Activated T-helper 2 cell treated with anti-CD3 and anti-CD28 coated beads, Interferon-gamma antibody, Interleukin-2, Interleukin-4, amounts not matched to agents 10 μg/mL and 5 μg/mL and 100 μg/mL, durations not matched to agents 14 hours and 24 hours and 36 hours (primary cell): ENCODE measurements at regions of chr13 and their contacts with region 1.

Region 1: DNA sequence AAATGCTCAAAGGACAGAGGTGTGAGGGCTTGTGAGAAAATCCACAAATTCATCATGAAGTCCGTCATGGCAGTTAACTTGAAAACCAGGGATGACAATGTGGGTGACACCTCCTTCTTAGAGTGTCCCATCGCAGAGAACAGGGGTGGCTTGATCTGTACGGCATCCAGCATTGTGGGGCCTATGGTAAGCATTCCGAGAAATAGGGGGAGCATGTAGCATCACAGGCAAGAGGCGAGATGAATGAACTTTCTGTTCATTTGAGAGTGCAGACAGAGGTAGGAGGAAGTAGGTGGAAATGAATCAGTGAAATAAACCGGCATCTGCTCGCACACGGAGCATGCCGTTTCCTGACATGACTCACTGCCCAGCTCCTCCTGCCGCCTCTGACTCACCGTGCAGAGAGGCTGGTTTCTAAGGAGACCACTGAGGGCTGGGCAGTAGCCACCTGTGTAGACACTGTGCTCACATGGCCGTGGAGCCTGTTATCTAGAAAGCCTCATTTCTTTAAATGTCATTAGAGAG is 339.0 kb downstream of the RFC3 start:
- DNase-seq: peak; percentile 67
- H3K4me3 Mint-ChIP-seq: peak overlapping the region; percentile 70
- H3K27ac Mint-ChIP-seq: peak overlapping the region; percentile 90
- H3K4me1 Mint-ChIP-seq: peaks cover 38% of the 10 kb centered on the region
- H3K27me3 Mint-ChIP-seq: peaks cover 17% of the 10 kb centered on the region

Region 2: DNA sequence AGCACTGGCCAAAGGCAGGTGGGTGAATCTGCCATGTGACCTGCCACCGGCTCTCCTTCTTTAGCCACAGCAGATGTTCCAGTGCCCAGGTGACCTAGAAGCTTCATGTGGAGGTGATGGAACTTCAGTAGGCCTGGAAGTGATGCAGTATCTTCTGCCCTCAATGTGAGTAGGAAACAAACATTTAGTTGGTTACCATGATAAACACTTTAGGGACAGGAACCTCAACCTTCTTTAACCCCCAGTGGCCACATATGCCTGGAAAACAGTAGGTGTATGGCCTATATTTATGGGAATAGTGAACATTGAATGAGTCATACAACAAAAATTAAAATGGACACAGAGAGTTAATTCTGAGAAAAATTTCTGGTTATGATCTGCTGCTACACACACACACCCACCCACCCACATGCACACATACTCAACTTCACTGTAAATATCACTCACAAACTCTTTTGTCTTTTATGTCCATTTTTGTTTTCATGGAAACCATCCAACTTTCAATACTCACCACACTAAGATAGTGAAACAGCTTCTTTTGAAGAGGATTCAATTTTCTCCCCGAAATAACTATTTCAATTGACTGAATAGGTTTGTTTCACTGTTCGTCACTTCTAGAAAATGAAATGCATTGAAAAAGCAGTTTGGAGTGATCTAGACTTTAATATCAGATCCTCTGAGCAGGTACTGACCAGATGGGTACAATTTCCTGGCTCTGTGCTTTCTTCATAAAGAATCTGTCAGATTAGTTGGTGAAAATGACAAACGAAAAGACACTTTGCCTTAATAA is 968.6 kb before region 1 on chr13:
- intact Hi-C with region 1: loop called (anchors 5 kb)
- DNase-seq: no peak
- H3K4me3 Mint-ChIP-seq: no peak overlapping the region
- H3K27ac Mint-ChIP-seq: peak overlapping the region; percentile 97
- H3K4me1 Mint-ChIP-seq: peaks cover 30% of the 10 kb centered on the region
- H3K27me3 Mint-ChIP-seq: no peaks in the 10 kb centered on the region

Region 3: DNA sequence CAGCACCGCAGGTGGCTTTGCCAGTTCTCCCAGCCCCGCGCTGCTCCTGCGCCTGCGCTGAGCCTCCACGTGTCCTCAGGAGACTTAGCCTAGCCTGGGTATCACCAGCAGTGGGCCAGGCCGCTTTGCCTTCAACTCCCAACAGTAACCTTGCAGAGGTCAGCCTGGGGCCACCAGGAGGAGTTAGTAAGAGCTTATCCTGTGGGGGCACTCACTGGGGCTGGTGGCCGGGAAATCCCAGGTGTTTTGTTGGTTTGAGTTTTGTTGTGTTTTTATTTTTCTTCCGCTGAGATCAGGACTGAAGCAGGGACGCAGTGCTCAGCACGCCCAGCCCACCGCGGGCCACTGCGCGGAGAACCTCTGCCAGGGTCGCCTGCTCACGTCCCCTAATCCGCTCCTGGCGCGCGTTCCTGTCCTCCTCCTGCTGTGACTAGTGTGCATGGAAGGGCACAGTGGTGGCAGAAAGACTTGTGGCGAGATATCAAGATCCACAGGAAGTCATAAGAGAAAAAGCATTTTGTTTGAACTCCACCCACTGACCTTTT is 546.4 kb before region 1 on chr13:
- intact Hi-C with region 1: loop called (anchors 2 kb)
- DNase-seq: peak; percentile 40
- H3K4me3 Mint-ChIP-seq: peak overlapping the region; percentile 70
- H3K27ac Mint-ChIP-seq: peak overlapping the region; percentile 95
- H3K4me1 Mint-ChIP-seq: peaks cover 50% of the 10 kb centered on the region
- H3K27me3 Mint-ChIP-seq: no peaks in the 10 kb centered on the region

Region 4: DNA sequence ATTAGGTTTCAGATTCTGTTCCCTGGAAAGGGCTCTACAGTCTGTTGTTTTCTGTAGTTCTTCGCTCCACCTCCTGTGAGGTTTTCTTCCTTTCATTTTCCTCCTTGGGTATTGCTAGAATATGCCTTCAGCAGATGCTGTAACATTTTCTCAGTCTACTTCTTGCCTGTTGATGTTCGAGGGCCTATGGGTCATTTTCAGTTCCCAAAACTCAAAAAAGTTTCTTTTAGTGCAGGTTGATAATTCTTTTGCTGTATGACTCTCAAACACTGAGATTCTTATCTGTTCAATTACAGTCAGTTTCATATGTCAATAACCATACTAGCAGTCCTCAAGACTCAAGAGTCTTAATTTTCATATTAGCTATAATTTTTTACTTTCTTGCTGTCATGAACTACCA is 70.6 kb before region 1 on chr13:
- intact Hi-C with region 1: no loop called
- DNase-seq: no peak
- H3K4me3 Mint-ChIP-seq: no peak overlapping the region
- H3K27ac Mint-ChIP-seq: no peak overlapping the region
- H3K4me1 Mint-ChIP-seq: no peaks in the 10 kb centered on the region
- H3K27me3 Mint-ChIP-seq: no peaks in the 10 kb centered on the region

Region 5: GRCh38 chr13:34174671-34175145 is 17.8 kb after region 1 on chr13:
- intact Hi-C with region 1: no loop called
- DNase-seq: no peak
- H3K4me3 Mint-ChIP-seq: no peak overlapping the region
- H3K27ac Mint-ChIP-seq: no peak overlapping the region
- H3K4me1 Mint-ChIP-seq: no peaks in the 10 kb centered on the region
- H3K27me3 Mint-ChIP-seq: peaks cover 2% of the 10 kb centered on the region

Region 6: GRCh38 chr13:34224877-34225276 is 68.0 kb after region 1 on chr13:
- intact Hi-C with region 1: loop called (anchors 5 kb)
- DNase-seq: no peak
- H3K4me3 Mint-ChIP-seq: no peak overlapping the region
- H3K27ac Mint-ChIP-seq: no peak overlapping the region
- H3K4me1 Mint-ChIP-seq: no peaks in the 10 kb centered on the region
- H3K27me3 Mint-ChIP-seq: no peaks in the 10 kb centered on the region

Region 7: DNA sequence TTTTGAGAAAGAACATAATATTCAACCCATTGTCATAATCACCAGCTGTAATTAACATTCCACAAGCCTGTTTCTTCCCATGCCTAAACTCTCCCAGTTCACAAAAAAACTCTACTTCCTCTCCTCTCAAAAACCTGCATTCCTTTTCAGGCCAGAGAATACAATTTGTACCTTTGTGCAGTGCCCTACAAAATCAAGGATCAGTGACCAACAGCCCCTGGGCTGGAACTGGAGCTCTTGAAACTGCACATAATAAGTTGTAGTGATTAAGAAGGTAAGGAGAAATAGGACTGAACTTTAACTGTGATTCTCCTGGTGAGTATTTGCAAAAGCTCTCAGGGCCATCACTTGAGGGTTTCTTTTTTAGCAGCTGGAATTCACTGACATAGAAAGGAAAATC is 133.8 kb after region 1 on chr13:
- intact Hi-C with region 1: no loop called
- DNase-seq: no peak
- H3K4me3 Mint-ChIP-seq: no peak overlapping the region
- H3K27ac Mint-ChIP-seq: no peak overlapping the region
- H3K4me1 Mint-ChIP-seq: no peaks in the 10 kb centered on the region
- H3K27me3 Mint-ChIP-seq: no peaks in the 10 kb centered on the region

Region 8: GRCh38 chr13:35164324-35164932 is 1007.5 kb after region 1 on chr13:
- intact Hi-C with region 1: loop called (anchors 10 kb)
- DNase-seq: no peak
- H3K4me3 Mint-ChIP-seq: no peak overlapping the region
- H3K27ac Mint-ChIP-seq: no peak overlapping the region
- H3K4me1 Mint-ChIP-seq: peaks cover 8% of the 10 kb centered on the region
- H3K27me3 Mint-ChIP-seq: no peaks in the 10 kb centered on the region